Activated T-helper 2 cell treated with anti-CD3 and anti-CD28 coated beads, Interferon-gamma antibody, Interleukin-2, Interleukin-4, amounts not matched to agents 10 μg/mL and 5 μg/mL and 100 μg/mL, durations not matched to agents 14 hours and 24 hours and 36 hours (primary cell): ENCODE measurements at regions of chr4 and their contacts with region 1.

Region 1: GRCh38 chr4:145618932-145619638 is at the start of gene MMAA:
- DNase-seq: peak; percentile 93
- H3K4me3 Mint-ChIP-seq: peak within 1 kb of the TSS; percentile 94
- H3K27ac Mint-ChIP-seq: peak within 1 kb of the TSS; percentile 99
- H3K4me1 Mint-ChIP-seq: peaks cover 49% of the 10 kb centered on the region
- H3K27me3 Mint-ChIP-seq: no peaks in the 10 kb centered on the region
- total RNA-seq, gene MMAA: 15.9 and 16.0 TPM in 2 replicates

Region 2: GRCh38 chr4:144174401-144175067 is 1444.6 kb before region 1 on chr4:
- intact Hi-C with region 1: loop called (anchors 5 kb)
- DNase-seq: peak; percentile 10
- H3K4me3 Mint-ChIP-seq: no peak overlapping the region
- H3K27ac Mint-ChIP-seq: peak overlapping the region; percentile 24
- H3K4me1 Mint-ChIP-seq: peaks cover 15% of the 10 kb centered on the region
- H3K27me3 Mint-ChIP-seq: peaks cover 6% of the 10 kb centered on the region

Region 3: GRCh38 chr4:145216535-145216934 is 402.6 kb before region 1 on chr4:
- intact Hi-C with region 1: loop called (anchors 5 kb)
- DNase-seq: no peak
- H3K4me3 Mint-ChIP-seq: no peak overlapping the region
- H3K27ac Mint-ChIP-seq: no peak overlapping the region
- H3K4me1 Mint-ChIP-seq: no peaks in the 10 kb centered on the region
- H3K27me3 Mint-ChIP-seq: peaks cover 17% of the 10 kb centered on the region

Region 4: GRCh38 chr4:145481164-145481941 is 137.7 kb before region 1 on chr4 and contains the start of gene SMAD1:
- intact Hi-C with region 1: loop called (anchors 2 kb)
- DNase-seq: peak; percentile 28
- H3K4me3 Mint-ChIP-seq: peak within 1 kb of the TSS; percentile 83
- H3K27ac Mint-ChIP-seq: peak within 1 kb of the TSS; percentile 81
- H3K4me1 Mint-ChIP-seq: peaks cover 13% of the 10 kb centered on the region
- H3K27me3 Mint-ChIP-seq: peaks cover 30% of the 10 kb centered on the region
- total RNA-seq, gene SMAD1: 5.8 and 7.5 TPM in 2 replicates

Region 5: GRCh38 chr4:145808021-145808650 is 189.1 kb after region 1 on chr4:
- intact Hi-C with region 1: loop called (anchors 1 kb)
- DNase-seq: peak; percentile 34
- H3K4me3 Mint-ChIP-seq: peak overlapping the region; percentile 57
- H3K27ac Mint-ChIP-seq: peak overlapping the region; percentile 97
- H3K4me1 Mint-ChIP-seq: peaks cover 54% of the 10 kb centered on the region
- H3K27me3 Mint-ChIP-seq: no peaks in the 10 kb centered on the region

Region 6: DNA sequence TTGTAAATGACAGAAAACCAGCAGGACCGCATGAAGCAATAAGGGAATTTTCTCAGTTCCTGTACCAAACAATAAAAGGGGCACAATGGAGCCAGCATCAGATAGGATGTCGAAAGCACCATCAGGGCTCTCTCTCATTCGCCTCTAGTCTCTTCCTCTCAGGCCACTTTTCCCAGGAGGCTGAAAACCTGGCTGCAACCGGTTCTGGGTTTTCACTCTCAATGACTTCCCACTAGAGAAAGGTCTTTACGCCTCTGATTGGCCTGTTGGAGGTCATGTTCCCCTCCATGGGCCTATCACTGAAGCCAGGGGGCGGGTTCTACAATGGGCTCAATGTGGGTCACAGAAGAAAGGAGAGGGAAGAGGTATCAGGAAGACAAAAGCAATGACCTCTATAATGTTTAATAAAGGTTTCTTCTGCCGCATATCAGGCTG is 290.2 kb after region 1 on chr4:
- intact Hi-C with region 1: no loop called
- DNase-seq: no peak
- H3K4me3 Mint-ChIP-seq: no peak overlapping the region
- H3K27ac Mint-ChIP-seq: no peak overlapping the region
- H3K4me1 Mint-ChIP-seq: peaks cover 15% of the 10 kb centered on the region
- H3K27me3 Mint-ChIP-seq: no peaks in the 10 kb centered on the region

Region 7: DNA sequence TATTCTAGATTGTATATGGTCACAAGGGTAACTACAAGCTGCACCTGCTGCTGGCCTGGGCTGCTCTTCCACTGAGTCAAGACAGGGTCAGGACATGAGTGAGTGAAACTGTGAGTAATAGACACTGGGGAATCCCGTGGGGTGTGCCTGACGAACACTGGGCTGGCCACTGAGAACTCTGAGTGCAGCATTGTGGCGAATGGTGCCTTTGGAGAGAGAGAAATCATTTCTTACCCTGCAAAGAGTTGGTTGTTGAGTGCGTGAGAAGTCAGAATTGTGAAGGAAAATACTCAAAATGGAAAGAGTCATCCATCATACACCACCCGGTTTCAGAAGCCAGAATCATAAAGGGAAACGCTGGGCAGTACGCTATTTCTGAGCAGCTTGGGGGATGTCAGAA is 513.4 kb after region 1 on chr4:
- intact Hi-C with region 1: loop called (anchors 5 kb)
- DNase-seq: peak; percentile 15
- H3K4me3 Mint-ChIP-seq: no peak overlapping the region
- H3K27ac Mint-ChIP-seq: peak overlapping the region; percentile 69
- H3K4me1 Mint-ChIP-seq: peaks cover 18% of the 10 kb centered on the region
- H3K27me3 Mint-ChIP-seq: peaks cover 2% of the 10 kb centered on the region